WTC11 (cell line): ENCODE measurements at regions of chr22 and their contacts with region 1.

Region 1: GRCh38 chr22:31556627-31557203 is 60.4 kb downstream of the SFI1 start:
- DNase-seq: no peak
- ATAC-seq: no peak
- H3K4me3 Mint-ChIP-seq: no peak overlapping the region
- H3K27ac Mint-ChIP-seq: no peak overlapping the region
- H3K4me1 Mint-ChIP-seq: peaks cover 5% of the 10 kb centered on the region
- H3K27me3 Mint-ChIP-seq: no peaks in the 10 kb centered on the region
- CTCF ChIP-seq: peak; percentile 32; the same call in 1 of the 2 replicates

Region 2: GRCh38 chr22:31451709-31452571 is 104.8 kb before region 1 on chr22:
- CTCF ChIA-PET with region 1: interaction called, 10 read pairs
- POLR2A ChIA-PET with region 1: no interaction called
- DNase-seq: no peak
- ATAC-seq: peak; percentile 85
- H3K4me3 Mint-ChIP-seq: no peak overlapping the region
- H3K27ac Mint-ChIP-seq: no peak overlapping the region
- H3K4me1 Mint-ChIP-seq: no peaks in the 10 kb centered on the region
- H3K27me3 Mint-ChIP-seq: no peaks in the 10 kb centered on the region
- CTCF ChIP-seq: no peak

Region 3: DNA sequence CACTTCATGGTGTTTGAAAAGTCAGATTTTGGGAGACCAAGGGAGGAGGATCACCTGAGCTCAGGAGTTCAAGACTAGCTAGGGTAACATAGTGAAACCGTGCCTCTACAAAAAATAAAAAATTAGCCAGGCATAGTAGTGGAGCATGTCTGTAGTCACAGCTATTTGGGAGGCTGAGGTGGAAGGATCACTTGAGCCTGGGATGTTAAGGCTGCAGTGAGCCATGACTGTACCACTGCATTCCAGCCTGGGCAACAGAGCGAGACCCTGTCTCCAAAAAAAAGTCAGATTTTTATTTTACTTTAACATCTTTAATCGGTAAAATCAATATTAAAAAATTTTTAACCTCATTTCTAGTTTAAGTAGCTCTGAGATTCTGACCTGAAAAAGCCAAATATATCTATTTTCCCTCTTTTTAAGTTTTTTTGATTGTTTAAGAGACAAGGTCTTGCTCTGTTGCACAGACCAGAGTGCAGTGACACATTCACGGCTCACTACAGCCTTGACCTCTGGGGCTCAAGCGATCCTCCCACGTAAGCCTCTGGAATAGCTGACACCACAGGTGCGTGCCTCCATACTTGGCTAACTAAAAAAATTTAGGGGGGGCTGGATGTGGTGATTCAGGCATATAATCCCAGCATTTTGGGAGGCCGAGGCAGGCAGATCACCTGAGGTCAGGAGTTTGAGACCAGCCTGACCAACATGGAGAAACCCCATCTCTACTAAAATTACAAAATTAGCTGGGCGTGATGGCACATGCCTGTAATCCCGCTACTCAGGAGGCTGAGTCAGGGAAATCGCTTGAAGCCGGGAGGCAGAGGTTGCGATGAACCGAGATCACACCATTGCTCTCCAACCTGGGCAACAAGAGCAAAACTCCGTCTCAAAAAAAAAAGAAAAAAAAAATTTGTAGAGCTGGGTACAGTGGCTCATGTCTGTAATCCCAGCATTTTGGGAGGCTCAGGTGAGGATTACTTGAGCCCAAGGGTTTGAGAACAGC is 11.9 kb before region 1 on chr22:
- CTCF ChIA-PET with region 1: interaction called, 10 read pairs
- POLR2A ChIA-PET with region 1: no interaction called
- DNase-seq: no peak
- ATAC-seq: no peak
- H3K4me3 Mint-ChIP-seq: no peak overlapping the region
- H3K27ac Mint-ChIP-seq: no peak overlapping the region
- H3K4me1 Mint-ChIP-seq: no peaks in the 10 kb centered on the region
- H3K27me3 Mint-ChIP-seq: no peaks in the 10 kb centered on the region
- CTCF ChIP-seq: no peak

Region 4: DNA sequence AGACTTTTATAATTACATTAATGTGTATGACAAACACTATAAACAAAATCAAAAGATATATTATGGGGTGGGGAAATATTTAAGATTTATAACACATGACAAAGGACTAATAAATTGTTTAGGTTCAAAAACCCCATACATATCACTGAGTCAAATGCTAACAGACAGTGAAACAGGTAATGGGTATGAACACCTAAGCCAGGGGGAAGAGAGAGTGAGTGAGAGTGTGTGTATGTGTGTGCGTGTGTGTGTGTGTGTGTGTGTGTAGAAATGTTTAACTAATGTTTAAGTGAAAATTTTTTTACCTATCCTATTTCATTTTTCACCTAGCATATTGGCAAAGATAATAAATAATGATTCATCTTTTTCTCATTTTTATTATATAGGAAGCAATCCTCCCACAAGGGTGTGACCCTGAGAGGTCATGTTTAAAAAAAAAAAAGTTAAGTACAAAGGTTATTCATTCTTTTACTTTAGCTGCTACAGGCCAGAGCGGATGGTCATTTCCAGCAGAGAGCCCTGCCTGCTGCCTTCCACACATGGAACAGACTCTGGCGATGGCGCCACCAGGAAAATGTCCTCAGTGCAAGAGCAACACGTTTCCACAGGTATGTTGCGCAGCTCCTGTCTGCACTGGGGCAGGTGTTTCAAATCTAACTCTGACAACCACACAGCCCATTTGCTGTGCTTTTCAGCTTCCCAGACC is 32.4 kb after region 1 on chr22:
- CTCF ChIA-PET with region 1: no interaction called
- POLR2A ChIA-PET with region 1: no interaction called
- DNase-seq: no peak
- ATAC-seq: no peak
- H3K4me3 Mint-ChIP-seq: no peak overlapping the region
- H3K27ac Mint-ChIP-seq: no peak overlapping the region
- H3K4me1 Mint-ChIP-seq: no peaks in the 10 kb centered on the region
- H3K27me3 Mint-ChIP-seq: no peaks in the 10 kb centered on the region
- CTCF ChIP-seq: no peak

Region 5: GRCh38 chr22:31605851-31606585 is 49.3 kb after region 1 on chr22:
- CTCF ChIA-PET with region 1: interaction called, 12 read pairs
- POLR2A ChIA-PET with region 1: no interaction called
- DNase-seq: no peak
- ATAC-seq: no peak
- H3K4me3 Mint-ChIP-seq: no peak overlapping the region
- H3K27ac Mint-ChIP-seq: no peak overlapping the region; the same call in 1 of the 2 replicates
- H3K4me1 Mint-ChIP-seq: no peaks in the 10 kb centered on the region
- H3K27me3 Mint-ChIP-seq: no peaks in the 10 kb centered on the region; the same call in 1 of the 2 replicates
- CTCF ChIP-seq: no peak

Region 6: DNA sequence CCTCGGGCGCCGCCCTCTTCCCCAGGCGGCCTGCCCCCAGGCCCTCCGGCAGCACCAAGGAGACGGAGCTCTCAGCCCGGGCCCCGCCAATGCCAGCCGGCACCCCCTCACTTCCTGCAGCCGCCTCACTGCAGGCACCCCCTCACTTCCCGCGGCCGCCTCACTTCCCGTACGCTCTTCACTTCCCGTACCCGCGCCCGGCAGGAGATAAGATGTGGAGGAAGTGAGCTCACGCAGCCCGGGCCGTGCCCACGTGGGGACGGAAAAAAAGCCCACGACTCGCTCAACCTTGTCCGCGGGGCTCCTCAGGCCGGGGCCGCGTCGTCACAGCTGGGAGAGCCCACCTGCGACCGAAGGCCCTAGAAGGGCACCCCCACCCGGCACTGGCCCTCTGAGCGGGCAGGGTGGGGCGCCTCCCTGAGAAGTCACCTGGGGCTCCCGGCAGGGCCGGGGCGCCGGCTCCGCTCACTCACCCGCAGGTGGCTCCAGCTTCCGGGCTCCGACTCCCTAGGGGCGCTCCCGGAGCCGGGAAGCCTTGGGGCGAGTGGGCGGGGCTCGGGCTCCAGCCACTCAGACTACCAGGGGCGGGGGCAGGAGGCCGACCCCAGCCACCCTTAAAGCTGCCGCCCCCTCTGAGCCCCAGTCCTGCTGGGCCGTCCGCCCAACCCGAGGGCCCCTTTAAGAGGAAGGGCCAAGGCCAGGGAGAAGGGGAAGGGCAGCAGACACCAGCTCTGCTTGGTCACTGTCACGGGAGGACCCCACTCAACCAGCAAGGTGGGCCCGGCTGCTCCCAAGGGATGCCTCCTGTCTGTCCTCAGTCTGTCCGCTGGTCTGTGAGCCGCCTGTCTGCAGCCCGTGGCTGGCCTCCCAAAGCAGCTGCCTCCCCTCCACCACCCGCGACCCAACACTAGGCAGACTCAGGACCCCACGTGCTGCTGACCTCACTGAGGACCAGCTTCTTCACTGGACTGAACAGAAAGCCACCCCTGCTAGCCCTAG is 73.9 kb after region 1 on chr22:
- CTCF ChIA-PET with region 1: interaction called, 19 read pairs
- POLR2A ChIA-PET with region 1: interaction called, 3 read pairs
- DNase-seq: peak; percentile 86
- ATAC-seq: peak; percentile 78
- H3K4me3 Mint-ChIP-seq: peak overlapping the region; percentile 85
- H3K27ac Mint-ChIP-seq: peak overlapping the region; percentile 68; the same call in 1 of the 2 replicates
- H3K4me1 Mint-ChIP-seq: peaks cover 31% of the 10 kb centered on the region
- H3K27me3 Mint-ChIP-seq: no peaks in the 10 kb centered on the region
- CTCF ChIP-seq: no peak